IMR-90 (cell line): ENCODE measurements at regions of chr21 and their contacts with region 1.

Region 1: GRCh38 chr21:28207436-28208173 is 785.1 kb downstream of the LTN1 start:
- DNase-seq: peak; percentile 83
- ATAC-seq: peak; percentile 96
- H3K4me3 ChIP-seq: no peak overlapping the region
- H3K27ac ChIP-seq: peak overlapping the region; percentile 90; the same call in 1 of the 2 replicates
- H3K4me1 ChIP-seq: peaks cover 7% of the 10 kb centered on the region
- H3K27me3 ChIP-seq: no peaks in the 10 kb centered on the region
- CTCF ChIP-seq: no peak
- POLR2A ChIP-seq: no peak
- RAD21 ChIP-seq: no peak

Region 2: GRCh38 chr21:28229814-28230213 is 22.2 kb after region 1 on chr21:
- CTCF ChIA-PET with region 1: no interaction called
- POLR2A ChIA-PET with region 1: no interaction called
- dilution Hi-C with region 1: no loop called
- in situ Hi-C with region 1: no loop called
- intact Hi-C with region 1: loop called (anchors 2 kb)
- DNase-seq: peak; percentile 93
- ATAC-seq: peak; percentile 64
- H3K4me3 ChIP-seq: no peak overlapping the region
- H3K27ac ChIP-seq: peak overlapping the region; percentile 91; the same call in 1 of the 2 replicates
- H3K4me1 ChIP-seq: peaks cover 12% of the 10 kb centered on the region
- H3K27me3 ChIP-seq: no peaks in the 10 kb centered on the region
- CTCF ChIP-seq: no peak
- POLR2A ChIP-seq: no peak
- RAD21 ChIP-seq: no peak

Region 3: GRCh38 chr21:28261298-28261697 is 53.7 kb after region 1 on chr21:
- CTCF ChIA-PET with region 1: no interaction called
- POLR2A ChIA-PET with region 1: no interaction called
- dilution Hi-C with region 1: no loop called
- in situ Hi-C with region 1: no loop called
- intact Hi-C with region 1: loop called (anchors 10 kb)
- DNase-seq: no peak
- ATAC-seq: no peak
- H3K4me3 ChIP-seq: no peak overlapping the region
- H3K27ac ChIP-seq: no peak overlapping the region
- H3K4me1 ChIP-seq: peaks cover 6% of the 10 kb centered on the region; the same call in 1 of the 2 replicates
- H3K27me3 ChIP-seq: no peaks in the 10 kb centered on the region
- CTCF ChIP-seq: no peak
- POLR2A ChIP-seq: no peak
- RAD21 ChIP-seq: no peak